RWPE1 (cell line): ENCODE measurements at regions of chr9 and their contacts with region 1.

Region 1: DNA sequence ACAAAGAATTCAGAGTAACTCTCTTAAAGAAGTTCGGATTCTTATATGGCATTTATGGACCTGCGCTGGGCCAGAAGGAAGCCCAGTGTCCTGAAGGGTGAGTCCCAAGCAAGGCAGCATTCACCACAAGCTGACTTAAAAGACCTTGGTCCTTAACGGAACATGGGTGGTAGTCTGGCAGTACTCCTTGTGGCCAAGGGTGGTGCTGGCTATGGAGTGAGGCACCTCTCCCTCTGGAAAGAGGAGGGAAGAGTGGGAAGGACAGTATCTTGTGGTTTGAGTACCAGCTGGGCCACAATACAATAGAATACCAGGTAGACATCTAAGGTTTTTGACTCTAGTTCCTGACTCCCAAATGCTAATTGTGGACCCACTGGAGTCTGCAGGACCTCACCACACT is 425.7 kb upstream of the CYLC2 start:
- DNase-seq: no peak
- H3K27ac ChIP-seq: no peak overlapping the region
- CTCF ChIP-seq: no peak

Region 2: GRCh38 chr9:102534031-102534430 is 35.4 kb before region 1 on chr9:
- CTCF ChIA-PET with region 1: interaction called, 12 read pairs
- POLR2A ChIA-PET with region 1: no interaction called
- DNase-seq: no peak
- H3K27ac ChIP-seq: no peak overlapping the region
- CTCF ChIP-seq: no peak

Region 3: GRCh38 chr9:103126494-103126893 is 557.1 kb after region 1 on chr9:
- CTCF ChIA-PET with region 1: no interaction called
- POLR2A ChIA-PET with region 1: no interaction called
- DNase-seq: no peak
- H3K27ac ChIP-seq: no peak overlapping the region
- CTCF ChIP-seq: no peak